ENCODE measurements at regions of chr19 and their contacts with region 1.

Region 1: GRCh38 chr19:39351537-39352064 is 9.4 kb downstream of the SAMD4B start:
- DNase-seq: peak in 1 of 2 experiments; percentile 42
- ATAC-seq: no peak
- H3K4me3 ChIP-seq: no peak overlapping the region
- H3K27ac ChIP-seq: no peak overlapping the region
- H3K4me1 ChIP-seq: peaks cover 6% of the 10 kb centered on the region; the same call in 1 of the 3 replicates
- CTCF ChIP-seq: no peak
- EP300 ChIP-seq: 0 out of 5 replicates have a peak, but pooled peaks of 1 of the 2 experiments have one; percentile 18
- POLR2A ChIP-seq: no peak
- RAD21 ChIP-seq: no peak

Region 2: DNA sequence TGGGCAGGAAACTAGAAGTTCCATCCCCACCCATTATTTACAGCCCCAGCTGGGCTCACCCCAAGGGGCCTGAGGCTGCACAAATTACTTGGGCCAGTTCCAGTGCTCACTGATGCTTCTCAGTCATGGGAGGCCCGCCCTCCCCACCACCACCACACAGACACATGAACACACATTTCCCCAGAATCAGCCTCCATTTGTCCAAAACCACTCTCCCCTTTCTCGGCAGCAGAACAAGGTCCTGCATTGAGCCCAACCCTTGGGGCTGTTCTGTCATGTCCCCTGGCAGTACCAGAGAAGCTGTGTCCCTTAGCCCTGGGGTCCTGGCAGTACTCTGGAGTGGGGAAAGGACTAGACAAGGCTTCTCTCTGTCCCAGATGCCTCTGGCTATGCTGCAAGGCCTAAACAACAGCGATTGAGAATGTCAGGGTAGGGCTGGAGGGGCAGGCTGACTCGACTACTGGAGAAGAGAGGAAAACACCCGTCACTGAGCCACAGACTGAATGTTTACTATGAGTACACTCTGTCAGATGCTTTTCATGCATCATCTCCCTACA is 12.4 kb after region 1 on chr19:
- CTCF ChIA-PET with region 1: interaction called, 18 read pairs
- POLR2A ChIA-PET with region 1: no interaction called
- DNase-seq: no peak
- ATAC-seq: no peak; a peak in 2 of 6 replicates
- H3K4me3 ChIP-seq: no peak overlapping the region
- H3K27ac ChIP-seq: no peak overlapping the region
- H3K4me1 ChIP-seq: no peaks in the 10 kb centered on the region
- CTCF ChIP-seq: no peak
- EP300 ChIP-seq: no peak
- POLR2A ChIP-seq: no peak
- RAD21 ChIP-seq: no peak

Region 3: DNA sequence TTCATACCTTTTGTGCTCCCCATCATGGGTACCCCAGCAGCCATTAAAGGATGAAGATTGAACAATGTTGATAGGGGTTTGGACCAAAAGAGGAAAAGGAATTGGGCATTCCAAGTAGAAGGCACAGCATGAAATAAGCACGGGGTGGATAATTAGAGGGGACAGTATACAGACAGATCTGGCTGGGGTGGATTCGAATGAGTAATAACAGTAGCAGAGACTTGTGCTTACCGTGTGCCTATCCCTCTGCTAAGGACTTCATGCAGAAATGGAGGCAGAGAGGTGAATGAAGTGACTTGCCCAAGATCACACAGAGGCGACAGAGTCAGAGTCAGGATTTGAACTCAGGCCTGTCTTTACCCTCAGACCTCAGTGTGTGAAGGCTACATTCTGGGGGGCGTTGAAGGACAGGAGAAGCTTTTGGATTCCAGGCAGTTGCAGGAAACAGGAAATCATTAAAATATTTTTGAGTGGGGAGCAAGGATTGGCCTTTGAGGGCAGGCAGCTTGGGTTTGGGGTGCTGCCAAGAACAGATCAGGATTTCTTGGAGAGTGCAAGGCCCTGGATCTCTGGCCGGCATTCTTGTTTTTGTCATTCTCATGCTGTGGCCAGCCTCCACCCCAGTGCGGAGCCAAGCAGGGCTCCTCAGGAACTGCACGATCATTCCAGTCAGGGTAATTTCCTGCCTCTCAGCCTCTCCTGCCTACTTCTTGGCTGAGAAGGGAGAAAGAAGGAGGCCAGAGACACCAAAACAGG is 20.6 kb after region 1 on chr19:
- CTCF ChIA-PET with region 1: interaction called, 12 read pairs
- POLR2A ChIA-PET with region 1: no interaction called
- DNase-seq: no peak
- ATAC-seq: no peak
- H3K4me3 ChIP-seq: no peak overlapping the region
- H3K27ac ChIP-seq: no peak overlapping the region
- H3K4me1 ChIP-seq: no peaks in the 10 kb centered on the region
- CTCF ChIP-seq: no peak
- EP300 ChIP-seq: no peak
- POLR2A ChIP-seq: no peak
- RAD21 ChIP-seq: no peak